Lower lobe of right lung (tissue), 2 donors: ENCODE measurements at regions of chr15 and their contacts with region 1.

Region 1: DNA sequence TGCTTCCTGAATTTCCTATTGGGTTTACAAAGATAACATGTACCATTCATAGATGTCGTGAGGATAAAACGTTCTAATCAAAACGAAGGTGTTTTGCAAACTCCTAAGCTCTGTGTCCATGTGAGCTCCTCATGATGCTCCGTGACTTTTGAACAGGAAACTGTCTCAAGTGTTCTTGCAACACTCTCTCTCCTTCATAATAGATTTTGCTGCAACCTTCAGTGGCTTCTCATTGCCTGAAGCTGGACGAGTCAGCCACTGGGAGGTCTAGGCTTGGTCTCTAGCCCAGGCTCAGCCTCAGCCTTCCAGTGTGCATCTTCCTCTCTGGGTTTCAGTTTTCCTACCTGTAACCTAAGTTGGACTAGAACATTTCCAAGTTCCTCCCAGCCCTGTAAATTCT is 18.7 kb upstream of the BCL2A1 start:
- DNase-seq: peak; percentile 57
- ATAC-seq: peak; percentile 81 to 82
- H3K4me3 ChIP-seq: no peak overlapping the region
- H3K27ac ChIP-seq: no peak overlapping the region
- H3K4me1 ChIP-seq: peaks cover 6% of the 10 kb centered on the region
- H3K27me3 ChIP-seq: no peaks in the 10 kb centered on the region
- CTCF ChIP-seq: no peak

Region 2: GRCh38 chr15:79863886-79864285 is 125.8 kb before region 1 on chr15:
- intact Hi-C with region 1: loop called (anchors 10 kb)
- DNase-seq: no peak
- ATAC-seq: no peak
- H3K4me3 ChIP-seq: no peak overlapping the region
- H3K27ac ChIP-seq: no peak overlapping the region
- H3K4me1 ChIP-seq: no peaks in the 10 kb centered on the region
- H3K27me3 ChIP-seq: no peaks in the 10 kb centered on the region
- CTCF ChIP-seq: no peak